Lower leg skin (tissue), 4 donors: ENCODE measurements at regions of chr4 and their contacts with region 1.

Region 1: GRCh38 chr4:83261307-83261706 is 23.3 kb downstream of the COQ2 start:
- DNase-seq: no peak
- H3K4me3 ChIP-seq: no peak overlapping the region
- CTCF ChIP-seq: no peak
- POLR2A ChIP-seq: no peak

Region 2: DNA sequence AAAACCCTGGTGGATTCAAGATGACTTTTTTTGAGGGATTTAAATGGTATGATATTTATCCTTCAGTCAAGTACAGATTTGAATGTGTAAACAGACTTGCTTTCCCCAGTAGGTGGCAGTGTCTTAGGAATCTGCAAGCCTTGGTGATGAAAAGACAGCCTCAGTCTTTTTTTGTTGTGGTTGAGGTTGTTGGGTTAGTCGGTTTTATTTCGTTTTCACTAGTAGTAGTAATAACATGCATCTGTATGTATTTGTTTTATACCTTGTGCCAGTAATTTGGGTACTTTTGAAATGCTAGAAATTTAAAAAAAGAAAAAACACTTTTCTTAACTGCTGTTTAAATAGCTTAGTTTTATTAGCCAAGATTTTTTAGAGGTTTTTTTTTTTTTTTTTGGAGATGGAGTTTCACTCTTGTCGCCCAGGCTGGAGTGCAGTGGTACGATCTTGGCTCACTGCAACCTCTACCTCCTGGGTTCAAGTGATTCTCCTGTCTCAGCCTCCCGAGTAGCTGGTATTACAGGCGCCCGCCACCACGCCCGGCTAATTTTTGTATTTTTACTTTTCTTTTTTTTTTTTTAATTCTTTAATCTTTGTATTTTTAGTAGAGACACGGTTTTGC is 187.1 kb before region 1 on chr4:
- intact Hi-C with region 1: loop called (anchors 5 kb)
- DNase-seq: peak in 1 of 2 donors; percentile 32
- H3K4me3 ChIP-seq: no peak overlapping the region
- CTCF ChIP-seq: no peak
- POLR2A ChIP-seq: no peak

Region 3: GRCh38 chr4:83320548-83320947 is 59.2 kb after region 1 on chr4:
- intact Hi-C with region 1: no loop called
- DNase-seq: peak; percentile 50 to 89
- H3K4me3 ChIP-seq: no peak overlapping the region
- CTCF ChIP-seq: no peak
- POLR2A ChIP-seq: no peak